Heart right ventricle (tissue), 16 donors: ENCODE measurements at regions of chr1 and their contacts with region 1.

Region 1: GRCh38 chr1:179293340-179294327 is at the start of gene SOAT1:
- DNase-seq: peak; percentile 94 to 97
- ATAC-seq: peak; percentile 98 to 100 (median 99)
- H3K4me3 ChIP-seq: peak within 1 kb of the TSS; percentile 55 to 84 (median 73)
- H3K27ac ChIP-seq: peak within 1 kb of the TSS; percentile 55 to 93 (median 90)
- H3K4me1 ChIP-seq: peaks cover 0 to 49% (median 20%) of the 10 kb centered on the region in 9 donors
- H3K27me3 ChIP-seq: no peaks in the 10 kb centered on the region
- CTCF ChIP-seq: peak in 4 of 9 donors; percentile 36 to 49 (median 41)
- total RNA-seq, gene SOAT1: 5.5 to 19.4 (median 7.6) TPM

Region 2: DNA sequence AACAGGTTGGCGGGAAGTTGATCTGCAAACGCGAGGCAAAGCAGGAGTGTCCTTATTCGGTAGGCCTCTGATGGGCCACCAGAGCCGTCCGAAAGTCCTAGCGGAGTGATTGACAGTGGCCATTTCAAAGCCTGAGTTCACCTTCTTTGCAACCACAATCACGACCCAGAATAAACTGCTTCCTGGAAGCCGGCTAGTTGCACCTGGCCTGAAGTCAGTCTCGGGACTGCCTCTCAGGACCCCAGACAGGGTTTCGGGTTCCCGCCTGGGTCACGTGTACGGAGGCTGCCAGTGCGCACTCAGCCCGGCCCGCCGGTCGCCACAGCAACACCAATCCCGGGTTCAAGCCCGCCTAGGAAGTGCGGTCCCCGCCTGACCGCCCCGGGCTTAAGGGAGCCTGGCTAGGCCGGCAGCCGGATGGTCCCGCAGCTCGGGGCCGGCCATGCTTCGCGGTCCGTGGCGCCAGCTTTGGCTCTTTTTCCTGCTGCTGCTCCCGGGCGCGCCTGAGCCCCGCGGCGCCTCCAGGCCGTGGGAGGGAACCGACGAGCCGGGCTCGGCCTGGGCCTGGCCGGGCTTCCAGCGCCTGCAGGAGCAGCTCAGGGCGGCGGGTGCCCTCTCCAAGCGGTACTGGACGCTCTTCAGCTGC is 211.8 kb before region 1 on chr1 and contains the start of gene TOR3A:
- intact Hi-C with region 1: loop called in 7 of 10 experiments (anchors 2 to 10 kb)
- DNase-seq: peak; percentile 92 to 93
- ATAC-seq: peak; percentile 97 to 99 (median 98)
- H3K4me3 ChIP-seq: peak within 1 kb of the TSS; percentile 80 to 99 (median 94)
- H3K27ac ChIP-seq: peak within 1 kb of the TSS; percentile 75 to 95 (median 92)
- H3K4me1 ChIP-seq: peaks cover 3 to 28% (median 17%) of the 10 kb centered on the region in 9 donors
- H3K27me3 ChIP-seq: no peaks in the 10 kb centered on the region
- CTCF ChIP-seq: no peak
- total RNA-seq, gene TOR3A: 6.8 to 18.0 (median 10.9) TPM

Region 3: DNA sequence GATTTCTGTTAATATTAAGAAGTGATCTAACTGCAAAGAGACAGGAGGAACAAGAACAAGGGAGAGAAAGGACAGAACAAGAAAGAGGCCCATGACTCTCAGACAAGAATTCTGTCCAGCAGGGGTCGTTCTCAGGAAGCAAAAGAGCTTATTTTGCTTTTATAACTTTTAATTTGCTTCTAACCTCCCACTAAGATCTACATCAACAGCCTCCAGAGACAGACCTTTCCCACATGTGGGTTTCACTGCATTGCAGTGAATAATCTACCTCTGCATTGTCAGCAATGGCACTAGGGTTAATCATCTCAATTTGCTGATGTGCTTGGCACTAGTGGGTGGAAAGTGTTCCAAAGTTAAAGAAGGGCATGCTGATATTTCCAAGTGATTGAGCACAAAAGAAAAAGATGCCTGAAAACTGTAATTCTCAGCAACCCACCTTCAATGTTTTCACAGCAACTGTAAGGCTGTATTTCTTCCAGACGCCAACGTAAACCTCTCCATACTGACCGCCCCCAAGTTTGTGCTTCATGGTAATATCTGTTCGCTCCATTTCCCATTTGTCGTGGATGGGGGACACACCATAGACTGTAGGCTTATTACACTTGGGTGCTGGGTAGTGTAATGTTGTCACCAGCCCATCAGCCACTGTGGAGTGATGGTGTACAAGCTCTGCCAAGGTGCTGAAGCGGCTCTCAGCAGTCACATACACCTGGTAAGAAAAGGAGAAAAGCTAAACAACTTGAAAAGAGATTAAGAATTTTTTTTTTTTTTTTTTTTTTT is 172.3 kb before region 1 on chr1:
- intact Hi-C with region 1: loop called in 2 of 10 experiments (anchors 10 kb)
- DNase-seq: no peak
- ATAC-seq: peak in 4 of 8 donors; percentile 27 to 61 (median 51)
- H3K4me3 ChIP-seq: no peak overlapping the region
- H3K27ac ChIP-seq: peak overlapping the region in 1 of 10 donors; percentile 2
- H3K4me1 ChIP-seq: peaks cover 0 to 19% (median 4%) of the 10 kb centered on the region in 9 donors
- H3K27me3 ChIP-seq: no peaks in the 10 kb centered on the region
- CTCF ChIP-seq: peak; percentile 35 to 75 (median 63)

Region 4: GRCh38 chr1:179229214-179230140 is 64.2 kb before region 1 on chr1 and contains the start of gene ABL2:
- intact Hi-C with region 1: loop called in 1 of 10 experiments (anchors 5 kb)
- DNase-seq: peak; percentile 39 to 50
- ATAC-seq: peak; percentile 67 to 92 (median 82)
- H3K4me3 ChIP-seq: peak within 1 kb of the TSS; percentile 62 to 100 (median 98)
- H3K27ac ChIP-seq: peak within 1 kb of the TSS; percentile 52 to 90 (median 86)
- H3K4me1 ChIP-seq: peaks cover 0 to 35% (median 21%) of the 10 kb centered on the region in 9 donors
- H3K27me3 ChIP-seq: no peaks in the 10 kb centered on the region
- CTCF ChIP-seq: no peak
- total RNA-seq, gene ABL2: 7.9 to 14.4 (median 11.3) TPM

Region 5: GRCh38 chr1:179353546-179353945 is 59.9 kb after region 1 on chr1:
- intact Hi-C with region 1: no loop called
- DNase-seq: peak in 1 of 2 donors; percentile 54
- ATAC-seq: peak; percentile 84 to 99 (median 96)
- H3K4me3 ChIP-seq: no peak overlapping the region
- H3K27ac ChIP-seq: peak overlapping the region in 3 of 10 donors; percentile 12 to 27 (median 25)
- H3K4me1 ChIP-seq: peaks cover 0 to 10% (median 0%) of the 10 kb centered on the region in 9 donors
- H3K27me3 ChIP-seq: no peaks in the 10 kb centered on the region
- CTCF ChIP-seq: no peak